ENCODE measurements at regions of chr4 and their contacts with region 1.

Region 1: DNA sequence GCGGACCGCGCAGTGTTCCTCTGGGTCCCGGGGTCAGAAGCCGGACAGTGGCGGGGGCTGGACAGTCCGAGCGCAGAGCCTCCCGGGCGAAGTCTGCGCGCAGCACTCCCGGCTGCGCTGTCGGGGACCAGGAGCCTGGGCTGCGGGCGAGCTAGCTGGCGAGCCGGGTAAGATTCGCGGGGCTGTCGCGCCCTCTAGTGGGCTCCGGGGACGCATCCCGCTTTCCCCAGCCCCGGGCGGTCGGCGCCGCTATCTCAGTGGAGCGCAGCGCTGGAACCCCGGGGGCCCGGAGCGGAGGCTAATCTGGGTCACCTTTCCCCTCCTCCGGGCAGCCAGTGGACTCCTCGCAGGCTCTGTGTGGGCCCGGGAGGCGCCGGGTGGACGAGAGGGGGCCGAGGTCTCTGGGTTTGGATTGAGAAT is 4.2 kb downstream of the PDGFRA start:
- DNase-seq: peak; percentile 91
- ATAC-seq: peak; percentile 93
- H3K4me3 Mint-ChIP-seq: peak overlapping the region; percentile 60
- H3K27ac Mint-ChIP-seq: no peak overlapping the region
- H3K4me1 Mint-ChIP-seq: peaks cover 20% of the 10 kb centered on the region
- H3K27me3 Mint-ChIP-seq: peaks cover 48% of the 10 kb centered on the region

Region 2: GRCh38 chr4:52376132-52376704 is 1857.1 kb before region 1 on chr4:
- CTCF ChIA-PET with region 1: interaction called, 12 read pairs
- POLR2A ChIA-PET with region 1: no interaction called
- intact Hi-C with region 1: loop called (anchors 1 to 5 kb)
- DNase-seq: peak; percentile 13
- ATAC-seq: no peak
- H3K4me3 Mint-ChIP-seq: no peak overlapping the region
- H3K27ac Mint-ChIP-seq: no peak overlapping the region
- H3K4me1 Mint-ChIP-seq: no peaks in the 10 kb centered on the region
- H3K27me3 Mint-ChIP-seq: peaks cover 13% of the 10 kb centered on the region

Region 3: GRCh38 chr4:52712172-52712990 is 1520.9 kb before region 1 on chr4:
- CTCF ChIA-PET with region 1: no interaction called
- POLR2A ChIA-PET with region 1: no interaction called
- intact Hi-C with region 1: loop called in 1 of 2 experiments (anchors 5 kb)
- DNase-seq: peak; percentile 98
- ATAC-seq: peak; percentile 96
- H3K4me3 Mint-ChIP-seq: peak overlapping the region; percentile 90
- H3K27ac Mint-ChIP-seq: peak overlapping the region; percentile 99
- H3K4me1 Mint-ChIP-seq: peaks cover 43% of the 10 kb centered on the region
- H3K27me3 Mint-ChIP-seq: no peaks in the 10 kb centered on the region

Region 4: DNA sequence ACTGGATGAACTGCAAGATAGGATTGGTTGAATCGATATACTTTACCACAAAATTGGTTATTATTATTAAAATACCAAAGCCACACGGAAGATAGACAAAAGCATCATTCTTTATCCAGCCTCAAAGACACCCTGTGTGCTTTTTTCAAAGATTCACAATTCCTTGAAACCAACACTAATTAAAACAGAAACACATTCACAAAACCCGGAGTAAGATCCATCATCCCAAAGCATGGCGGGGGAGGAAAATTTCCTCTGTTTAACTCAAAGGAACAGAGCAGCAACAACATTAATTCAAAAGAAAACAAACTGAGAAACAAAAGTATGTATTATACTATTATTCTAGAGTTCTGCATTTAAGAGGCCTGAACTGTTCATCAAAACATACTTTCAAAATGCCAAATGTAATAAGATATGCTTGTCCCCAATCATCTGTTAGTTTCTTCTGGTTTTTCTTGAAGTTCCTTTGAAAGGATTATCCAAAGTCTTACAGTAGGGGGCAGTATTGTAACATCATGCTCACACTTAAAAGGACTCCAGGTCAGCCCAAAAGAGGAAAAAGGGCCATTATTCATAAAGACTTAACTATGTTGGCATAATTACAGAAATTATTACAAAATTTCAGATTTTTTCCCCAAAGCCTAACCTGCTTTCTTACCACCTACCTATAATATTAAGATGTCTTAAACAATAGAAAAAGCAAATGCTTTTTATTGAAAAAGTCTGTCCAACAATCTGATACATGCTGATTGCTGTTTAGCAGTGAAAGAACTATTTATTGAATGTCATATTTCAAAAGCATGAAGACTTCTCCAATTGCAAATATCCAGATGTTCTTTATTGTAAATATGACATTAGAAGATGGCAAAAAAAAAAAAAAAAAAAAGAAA is 1036.2 kb before region 1 on chr4:
- CTCF ChIA-PET with region 1: interaction called, 5 read pairs
- POLR2A ChIA-PET with region 1: no interaction called
- intact Hi-C with region 1: loop called (anchors 1 kb)
- DNase-seq: no peak
- ATAC-seq: peak; percentile 36
- H3K4me3 Mint-ChIP-seq: no peak overlapping the region
- H3K27ac Mint-ChIP-seq: no peak overlapping the region
- H3K4me1 Mint-ChIP-seq: no peaks in the 10 kb centered on the region
- H3K27me3 Mint-ChIP-seq: no peaks in the 10 kb centered on the region

Region 5: GRCh38 chr4:53592686-53593501 is 640.4 kb before region 1 on chr4:
- CTCF ChIA-PET with region 1: no interaction called
- POLR2A ChIA-PET with region 1: no interaction called
- intact Hi-C with region 1: loop called in 1 of 2 experiments (anchors 10 kb)
- DNase-seq: no peak
- ATAC-seq: no peak
- H3K4me3 Mint-ChIP-seq: no peak overlapping the region
- H3K27ac Mint-ChIP-seq: no peak overlapping the region
- H3K4me1 Mint-ChIP-seq: peaks cover 9% of the 10 kb centered on the region
- H3K27me3 Mint-ChIP-seq: peaks cover 36% of the 10 kb centered on the region

Region 6: GRCh38 chr4:53914313-53915016 is 318.8 kb before region 1 on chr4:
- CTCF ChIA-PET with region 1: interaction called, 58 read pairs
- POLR2A ChIA-PET with region 1: no interaction called
- intact Hi-C with region 1: no loop called
- DNase-seq: peak; percentile 36
- ATAC-seq: peak; percentile 66
- H3K4me3 Mint-ChIP-seq: no peak overlapping the region
- H3K27ac Mint-ChIP-seq: no peak overlapping the region
- H3K4me1 Mint-ChIP-seq: no peaks in the 10 kb centered on the region
- H3K27me3 Mint-ChIP-seq: peaks cover 11% of the 10 kb centered on the region

Region 7: DNA sequence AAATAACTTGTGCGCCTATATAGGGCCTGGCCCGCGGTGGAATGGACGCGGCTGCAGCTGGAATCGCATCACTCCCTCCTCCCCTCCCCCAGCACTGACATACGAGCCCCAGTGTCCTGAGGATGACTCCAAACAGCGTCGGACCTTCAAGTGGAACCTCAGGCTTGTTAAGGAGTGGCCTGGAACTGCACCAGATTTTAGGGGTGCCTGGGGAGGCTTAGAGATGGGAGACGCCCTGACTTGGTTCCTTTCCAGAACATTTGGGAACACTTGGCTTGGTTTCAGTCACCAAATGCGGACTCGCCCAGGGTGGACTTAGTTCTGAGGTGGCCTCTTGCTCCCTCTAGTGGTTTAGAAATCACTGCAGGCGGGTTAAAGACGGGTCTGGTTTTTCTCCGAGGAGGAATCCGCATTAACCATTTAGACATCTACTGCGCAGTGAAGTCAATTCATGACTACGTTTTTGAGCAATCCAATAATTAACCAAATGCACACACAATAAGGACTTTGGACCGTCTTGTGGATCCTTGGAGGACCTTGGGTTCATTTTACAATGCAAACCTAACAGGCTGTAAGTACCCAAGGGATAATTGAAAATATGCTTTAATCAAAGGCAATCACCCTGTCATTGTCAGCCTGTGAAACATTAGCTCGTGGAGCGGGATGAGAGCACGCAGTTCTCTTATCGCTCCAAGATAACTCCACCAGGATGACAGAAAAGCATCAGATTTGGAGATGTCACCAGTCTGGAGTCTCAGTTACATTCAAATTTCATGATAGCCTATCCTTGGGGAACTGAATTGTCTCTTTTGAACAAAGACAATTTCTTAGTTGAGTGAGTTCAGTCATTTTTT is 15.4 kb before region 1 on chr4:
- CTCF ChIA-PET with region 1: interaction called, 14 read pairs
- POLR2A ChIA-PET with region 1: interaction called, 3 read pairs
- intact Hi-C with region 1: no loop called
- DNase-seq: peak; percentile 68
- ATAC-seq: peak; percentile 89
- H3K4me3 Mint-ChIP-seq: peak overlapping the region; percentile 45
- H3K27ac Mint-ChIP-seq: no peak overlapping the region
- H3K4me1 Mint-ChIP-seq: peaks cover 3% of the 10 kb centered on the region
- H3K27me3 Mint-ChIP-seq: peaks cover 27% of the 10 kb centered on the region

Region 8: DNA sequence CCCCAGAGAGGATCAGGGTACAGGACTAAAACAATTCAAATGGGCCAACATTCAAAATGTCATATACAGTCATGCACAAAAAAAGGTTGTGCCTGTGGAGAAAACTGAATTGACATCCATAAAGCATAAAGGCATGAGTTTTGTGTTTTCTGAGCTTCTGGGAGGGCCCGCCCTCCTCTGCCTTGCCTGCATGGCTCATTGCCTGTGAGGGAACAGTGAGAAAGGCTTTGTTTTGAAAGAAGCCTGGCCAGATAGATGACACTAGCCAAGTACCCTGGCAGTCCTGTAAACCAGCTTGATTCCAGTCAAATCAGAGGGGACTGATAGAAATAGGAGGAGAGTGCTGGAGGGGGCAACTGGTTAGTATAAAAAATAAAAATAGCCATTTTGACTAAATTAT is 618.8 kb after region 1 on chr4:
- CTCF ChIA-PET with region 1: no interaction called
- POLR2A ChIA-PET with region 1: no interaction called
- intact Hi-C with region 1: no loop called
- DNase-seq: no peak
- ATAC-seq: no peak
- H3K4me3 Mint-ChIP-seq: no peak overlapping the region
- H3K27ac Mint-ChIP-seq: no peak overlapping the region
- H3K4me1 Mint-ChIP-seq: no peaks in the 10 kb centered on the region
- H3K27me3 Mint-ChIP-seq: no peaks in the 10 kb centered on the region

Measured in activated CD4-positive, alpha-beta T cell treated with anti-CD3 and anti-CD28 coated beads for 36 hours (primary cell).